Activated CD4-positive, alpha-beta T cell treated with anti-CD3 and anti-CD28 coated beads, Interleukin-2, amount 10 ng/mL, durations not matched to agents 24 days and 14 days (primary cell): ENCODE measurements at regions of chr4 and their contacts with region 1.

Region 1: GRCh38 chr4:98658287-98659105 is at the start of gene TSPAN5:
- DNase-seq: peak; percentile 95
- H3K4me3 Mint-ChIP-seq: peak within 1 kb of the TSS; percentile 93
- H3K27ac Mint-ChIP-seq: peak within 1 kb of the TSS; percentile 81
- H3K4me1 Mint-ChIP-seq: peaks cover 70% of the 10 kb centered on the region
- H3K27me3 Mint-ChIP-seq: no peaks in the 10 kb centered on the region
- total RNA-seq, gene TSPAN5: 30.4 and 30.7 TPM in 2 replicates

Region 2: GRCh38 chr4:98242538-98242937 is 416.0 kb before region 1 on chr4:
- intact Hi-C with region 1: no loop called
- DNase-seq: no peak
- H3K4me3 Mint-ChIP-seq: no peak overlapping the region
- H3K27ac Mint-ChIP-seq: no peak overlapping the region
- H3K4me1 Mint-ChIP-seq: no peaks in the 10 kb centered on the region
- H3K27me3 Mint-ChIP-seq: peaks cover 29% of the 10 kb centered on the region

Region 3: GRCh38 chr4:98260579-98261290 is 397.8 kb before region 1 on chr4:
- intact Hi-C with region 1: loop called (anchors 2 kb)
- DNase-seq: peak; percentile 97
- H3K4me3 Mint-ChIP-seq: peak overlapping the region; percentile 95
- H3K27ac Mint-ChIP-seq: peak overlapping the region; percentile 96
- H3K4me1 Mint-ChIP-seq: peaks cover 35% of the 10 kb centered on the region
- H3K27me3 Mint-ChIP-seq: peaks cover 4% of the 10 kb centered on the region

Region 4: DNA sequence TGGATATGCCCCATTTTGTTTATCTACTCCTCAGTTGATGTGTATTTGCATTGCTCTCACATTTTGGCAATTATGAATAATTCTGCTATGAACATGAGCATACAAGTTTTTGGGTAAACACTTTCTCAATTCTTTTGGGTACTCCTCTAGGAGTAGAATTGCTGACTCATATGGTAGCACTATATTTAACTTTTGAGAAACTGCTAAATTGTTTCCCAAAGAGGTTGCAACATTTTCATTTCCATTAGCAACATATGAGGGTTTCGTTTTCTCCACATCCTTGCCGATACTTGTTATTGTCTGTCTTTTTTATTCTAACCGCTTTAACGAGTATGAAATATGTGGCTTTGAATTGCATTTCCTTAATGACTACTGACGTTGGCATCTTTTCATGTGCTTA is 185.4 kb before region 1 on chr4:
- intact Hi-C with region 1: no loop called
- DNase-seq: no peak
- H3K4me3 Mint-ChIP-seq: no peak overlapping the region
- H3K27ac Mint-ChIP-seq: no peak overlapping the region
- H3K4me1 Mint-ChIP-seq: peaks cover 35% of the 10 kb centered on the region
- H3K27me3 Mint-ChIP-seq: no peaks in the 10 kb centered on the region

Region 5: GRCh38 chr4:98482847-98483806 is 175.4 kb before region 1 on chr4:
- intact Hi-C with region 1: loop called (anchors 1 kb)
- DNase-seq: peak; percentile 75
- H3K4me3 Mint-ChIP-seq: peak overlapping the region; percentile 80
- H3K27ac Mint-ChIP-seq: peak overlapping the region; percentile 99
- H3K4me1 Mint-ChIP-seq: peaks cover 79% of the 10 kb centered on the region
- H3K27me3 Mint-ChIP-seq: no peaks in the 10 kb centered on the region

Region 6: DNA sequence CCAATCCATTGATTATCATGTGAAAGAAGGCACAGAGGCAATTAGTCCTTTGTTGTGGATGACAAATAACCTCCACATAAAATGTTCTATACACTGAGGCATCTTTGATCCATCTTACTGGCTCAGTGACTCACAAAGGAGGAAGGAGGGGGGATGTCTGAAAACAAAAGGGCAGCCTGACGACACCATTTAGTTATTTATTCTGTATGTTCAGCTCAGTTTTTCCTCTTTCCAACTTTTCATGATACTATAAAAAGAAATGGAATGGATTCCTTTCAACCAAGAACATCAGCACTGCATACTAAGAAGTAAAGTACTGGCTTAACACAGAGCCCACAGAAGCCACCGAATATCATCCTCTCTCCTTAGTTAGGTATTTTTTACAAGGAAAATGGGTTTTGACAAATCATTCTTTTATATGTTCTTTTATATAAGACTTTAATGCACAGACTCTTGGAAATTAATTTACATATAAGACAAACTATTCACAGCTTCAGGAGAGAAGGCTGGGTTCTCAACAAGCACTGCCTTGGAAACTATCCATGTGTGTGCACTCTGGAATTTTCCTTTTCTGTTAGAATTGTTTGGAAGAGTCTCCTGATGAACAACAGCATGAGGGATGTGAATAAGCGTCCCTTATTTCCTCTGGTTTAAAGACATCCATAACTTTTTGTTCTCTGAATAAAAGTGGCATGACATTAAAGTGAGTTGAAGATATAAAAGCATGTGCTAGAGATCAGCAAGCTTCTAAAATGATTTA is 135.7 kb before region 1 on chr4:
- intact Hi-C with region 1: no loop called
- DNase-seq: no peak
- H3K4me3 Mint-ChIP-seq: peak overlapping the region; percentile 4
- H3K27ac Mint-ChIP-seq: peak overlapping the region; percentile 77
- H3K4me1 Mint-ChIP-seq: peaks cover 42% of the 10 kb centered on the region
- H3K27me3 Mint-ChIP-seq: no peaks in the 10 kb centered on the region

Region 7: GRCh38 chr4:98639523-98639922 is 19.0 kb before region 1 on chr4:
- intact Hi-C with region 1: loop called (anchors 1 kb)
- DNase-seq: peak; percentile 77
- H3K4me3 Mint-ChIP-seq: peak overlapping the region; percentile 80
- H3K27ac Mint-ChIP-seq: peak overlapping the region; percentile 85
- H3K4me1 Mint-ChIP-seq: peaks cover 46% of the 10 kb centered on the region
- H3K27me3 Mint-ChIP-seq: no peaks in the 10 kb centered on the region

Region 8: GRCh38 chr4:98905839-98906238 is 247.3 kb after region 1 on chr4:
- intact Hi-C with region 1: no loop called
- DNase-seq: no peak
- H3K4me3 Mint-ChIP-seq: no peak overlapping the region
- H3K27ac Mint-ChIP-seq: no peak overlapping the region
- H3K4me1 Mint-ChIP-seq: peaks cover 33% of the 10 kb centered on the region
- H3K27me3 Mint-ChIP-seq: no peaks in the 10 kb centered on the region

Region 9: GRCh38 chr4:98928505-98929340 is 270.2 kb after region 1 on chr4 and contains the start of gene EIF4E:
- intact Hi-C with region 1: loop called (anchors 1 kb)
- DNase-seq: peak; percentile 98
- H3K4me3 Mint-ChIP-seq: peak within 1 kb of the TSS; percentile 90
- H3K27ac Mint-ChIP-seq: peak within 1 kb of the TSS; percentile 97
- H3K4me1 Mint-ChIP-seq: peaks cover 38% of the 10 kb centered on the region
- H3K27me3 Mint-ChIP-seq: no peaks in the 10 kb centered on the region
- total RNA-seq, gene EIF4E: 151 and 156 TPM in 2 replicates

Region 10: DNA sequence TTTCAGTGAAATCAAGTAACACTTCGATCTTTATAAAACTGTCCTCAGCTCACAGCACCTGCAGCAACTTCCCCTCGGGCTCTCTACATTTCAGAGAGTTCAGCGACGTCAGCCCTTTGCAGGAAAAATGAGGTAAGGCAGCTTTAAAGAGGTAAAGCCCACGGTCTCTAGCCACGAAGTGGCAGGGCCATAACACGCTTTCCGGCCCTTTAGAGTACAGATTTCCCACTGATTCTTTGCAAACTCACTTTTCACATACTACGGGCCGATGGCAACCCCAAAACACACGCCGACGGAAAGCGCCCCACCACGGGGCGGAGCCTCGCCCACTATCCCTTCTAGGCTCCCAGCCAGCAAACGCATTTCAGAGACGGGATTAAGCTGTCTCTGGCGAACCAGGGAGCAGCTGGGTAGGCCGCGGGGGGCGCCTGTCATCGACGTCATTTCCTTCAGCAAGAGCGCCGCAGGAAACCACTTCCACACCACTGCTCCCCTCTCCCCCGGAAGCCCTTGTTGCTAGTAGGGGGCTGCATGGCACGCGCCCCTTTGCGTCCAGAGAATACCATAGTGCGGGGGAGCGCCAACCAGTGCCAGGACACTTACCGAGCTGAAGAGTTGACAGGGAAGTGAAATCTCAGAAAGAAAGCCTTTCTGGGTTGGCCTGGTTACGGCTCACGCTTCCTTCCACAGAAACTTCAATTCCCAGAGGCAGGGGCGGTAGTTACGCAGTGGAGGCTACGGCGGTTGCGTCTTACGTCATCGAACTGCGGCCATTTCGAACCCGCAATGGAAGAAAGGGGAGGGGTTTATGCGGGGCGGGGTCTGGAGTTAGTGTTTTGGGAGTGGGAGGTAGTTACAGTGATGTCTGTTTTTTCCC is 905.1 kb after region 1 on chr4 and contains the start of gene TRMT10A:
- intact Hi-C with region 1: loop called (anchors 5 kb)
- DNase-seq: peak; percentile 97
- H3K4me3 Mint-ChIP-seq: peak within 1 kb of the TSS; percentile 97
- H3K27ac Mint-ChIP-seq: peak within 1 kb of the TSS; percentile 99
- H3K4me1 Mint-ChIP-seq: peaks cover 16% of the 10 kb centered on the region
- H3K27me3 Mint-ChIP-seq: peaks cover 13% of the 10 kb centered on the region
- total RNA-seq, gene TRMT10A: 7.4 and 8.6 TPM in 2 replicates